Prostate gland (tissue), 2 donors: ENCODE measurements at regions of chr14 and their contacts with region 1.

Region 1: GRCh38 chr14:24798911-24799462 is 165.0 kb upstream of the GZMB start:
- DNase-seq: no peak
- H3K4me3 ChIP-seq: no peak overlapping the region
- H3K27ac ChIP-seq: no peak overlapping the region
- H3K4me1 ChIP-seq: no peaks in the 10 kb centered on the region
- H3K27me3 ChIP-seq: no peaks in the 10 kb centered on the region
- CTCF ChIP-seq: no peak
- POLR2A ChIP-seq: no peak

Region 2: DNA sequence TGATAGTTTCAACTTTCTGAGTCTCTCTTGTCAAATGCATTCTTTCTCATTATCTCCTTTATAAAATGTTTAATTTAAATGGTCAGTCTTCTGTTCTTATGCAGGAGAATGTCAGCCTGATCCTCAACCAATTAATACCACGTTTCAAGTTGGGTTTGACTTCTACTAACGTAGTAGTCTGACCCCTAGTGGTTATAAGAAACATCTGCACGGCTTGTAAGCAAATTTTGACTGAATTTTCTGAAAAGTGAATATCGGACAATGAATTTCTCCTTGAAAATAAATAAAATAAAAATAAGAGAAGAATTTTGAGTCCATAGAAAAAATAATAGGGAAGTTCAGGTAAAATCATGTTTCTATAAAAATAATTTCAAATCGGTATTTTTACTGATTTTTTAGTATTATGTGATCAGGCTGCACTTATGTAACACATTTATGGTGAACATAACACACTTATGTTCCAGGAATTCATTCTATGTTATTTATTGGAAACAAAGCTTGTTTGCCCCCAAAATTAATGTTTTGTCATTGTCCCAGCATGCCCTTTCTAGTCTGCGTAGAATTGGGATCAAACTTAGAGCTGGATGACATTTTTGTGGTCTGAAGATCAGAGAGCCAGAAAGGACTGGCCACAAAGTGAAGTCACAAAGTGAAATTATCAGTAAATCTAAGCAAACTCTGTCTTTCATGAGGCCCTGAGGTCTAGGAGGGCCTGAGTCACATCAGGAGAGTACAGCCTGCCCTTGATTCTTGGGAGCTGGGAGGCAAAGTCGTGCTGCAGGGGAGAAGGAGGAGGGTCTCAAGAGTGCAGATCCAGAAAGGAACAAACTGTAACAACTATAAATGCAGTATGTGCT is 352.2 kb after region 1 on chr14:
- intact Hi-C with region 1: loop called (anchors 10 kb)
- DNase-seq: no peak
- H3K4me3 ChIP-seq: no peak overlapping the region
- H3K27ac ChIP-seq: no peak overlapping the region
- H3K4me1 ChIP-seq: no peaks in the 10 kb centered on the region
- H3K27me3 ChIP-seq: no peaks in the 10 kb centered on the region
- CTCF ChIP-seq: peak; percentile 61 to 88 (median 82)
- POLR2A ChIP-seq: no peak